ENCODE measurements at regions of chr4 and their contacts with region 1.

Region 1: GRCh38 chr4:184825896-184826690 is at the start of gene ACSL1:
- DNase-seq: peak; percentile 76
- H3K4me3 Mint-ChIP-seq: peak within 1 kb of the TSS; percentile 84
- H3K27ac Mint-ChIP-seq: peak within 1 kb of the TSS; percentile 57
- H3K4me1 Mint-ChIP-seq: peaks cover 31% of the 10 kb centered on the region
- H3K27me3 Mint-ChIP-seq: no peaks in the 10 kb centered on the region
- total RNA-seq, gene ACSL1: 29.8 to 31.9 TPM

Region 2: DNA sequence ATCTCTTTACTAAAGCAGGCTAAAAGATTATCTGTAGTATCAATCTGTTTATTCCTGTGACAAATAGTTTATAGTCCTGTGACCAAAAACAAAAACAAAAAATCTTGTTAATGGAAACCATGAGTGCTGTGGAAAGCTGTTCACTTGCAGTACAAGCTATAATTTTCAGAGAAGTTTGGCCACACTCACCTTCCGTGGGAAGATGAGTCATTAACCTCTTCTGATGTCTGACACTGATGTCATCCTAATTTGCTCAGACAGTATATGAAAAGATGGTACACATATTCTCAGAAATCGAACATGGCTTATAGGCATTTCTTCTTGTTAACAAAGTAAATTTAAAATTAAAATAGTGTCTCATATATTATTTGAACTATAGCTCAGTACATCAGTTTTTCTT is 588.5 kb before region 1 on chr4:
- CTCF ChIA-PET with region 1: no interaction called
- intact Hi-C with region 1: loop called (anchors 10 kb)
- DNase-seq: peak; percentile 84
- H3K4me3 Mint-ChIP-seq: peak overlapping the region; percentile 32
- H3K27ac Mint-ChIP-seq: peak overlapping the region; percentile 93
- H3K4me1 Mint-ChIP-seq: peaks cover 40% of the 10 kb centered on the region
- H3K27me3 Mint-ChIP-seq: no peaks in the 10 kb centered on the region

Region 3: DNA sequence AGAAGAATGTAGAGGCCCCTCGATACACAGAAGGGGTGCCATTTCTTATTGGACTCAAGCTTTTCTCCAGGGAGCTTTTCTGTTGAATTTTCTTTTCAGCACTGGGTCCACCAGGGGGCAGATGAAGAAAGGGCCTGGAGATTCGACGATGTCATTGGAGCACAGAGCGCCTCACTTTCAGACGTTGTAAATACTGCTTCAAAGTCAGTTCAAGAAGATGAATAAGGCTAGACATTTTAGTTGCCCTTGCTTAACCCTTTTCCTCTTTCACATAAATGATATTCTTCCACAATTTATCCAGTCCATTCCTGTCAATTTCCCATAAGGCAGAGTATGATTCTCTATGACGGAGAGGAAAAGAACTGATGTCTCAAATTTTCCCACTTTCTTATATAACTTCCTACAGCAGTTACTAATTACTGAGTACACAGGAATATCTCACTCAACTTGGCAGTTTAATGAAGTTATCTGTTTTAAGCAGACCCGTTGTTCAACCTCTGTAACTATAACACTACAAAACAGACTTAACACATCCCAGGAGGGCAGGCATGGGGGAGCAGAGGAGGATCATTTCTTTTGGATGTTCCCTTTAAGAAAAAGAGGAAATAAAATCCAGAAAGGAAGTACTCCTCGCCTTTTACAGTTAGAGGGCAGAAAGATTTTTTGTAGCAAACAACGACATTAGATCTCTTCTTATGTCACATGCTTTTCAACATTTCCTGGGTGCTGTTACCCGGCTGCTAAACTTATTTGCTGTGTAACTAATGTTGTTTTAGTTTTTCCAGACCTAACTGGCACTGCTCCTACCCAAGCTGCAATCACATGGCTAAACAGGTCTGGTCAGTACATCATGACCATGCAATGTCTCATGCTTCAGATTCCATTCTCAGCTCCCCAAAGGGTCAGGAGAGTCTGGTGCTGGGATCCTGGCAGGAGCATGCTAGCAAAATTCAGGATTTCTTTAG is 80.0 kb before region 1 on chr4:
- CTCF ChIA-PET with region 1: interaction called, 4 read pairs
- intact Hi-C with region 1: loop called (anchors 2 kb)
- DNase-seq: peak; percentile 91
- H3K4me3 Mint-ChIP-seq: no peak overlapping the region
- H3K27ac Mint-ChIP-seq: no peak overlapping the region
- H3K4me1 Mint-ChIP-seq: peaks cover 15% of the 10 kb centered on the region
- H3K27me3 Mint-ChIP-seq: no peaks in the 10 kb centered on the region

Region 4: DNA sequence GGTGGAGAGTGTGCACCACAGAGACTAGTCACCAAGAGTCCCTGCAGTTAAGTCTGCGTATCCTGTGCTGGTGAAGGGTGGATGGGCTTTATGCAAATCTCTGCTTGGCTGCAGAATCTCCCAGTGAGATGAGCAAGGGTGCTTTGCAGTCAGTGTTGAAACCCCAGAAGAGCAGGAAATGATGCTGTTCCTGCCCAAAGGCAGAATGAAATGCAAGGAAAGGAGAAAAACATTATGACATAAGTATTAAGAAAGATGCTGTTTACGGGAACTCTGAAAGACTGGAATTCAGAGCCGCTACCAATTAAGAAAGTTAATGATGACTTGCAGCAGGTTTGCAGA is 25.1 kb after region 1 on chr4:
- CTCF ChIA-PET with region 1: no interaction called
- intact Hi-C with region 1: loop called (anchors 1 kb)
- DNase-seq: peak; percentile 74
- H3K4me3 Mint-ChIP-seq: no peak overlapping the region
- H3K27ac Mint-ChIP-seq: no peak overlapping the region
- H3K4me1 Mint-ChIP-seq: peaks cover 29% of the 10 kb centered on the region
- H3K27me3 Mint-ChIP-seq: no peaks in the 10 kb centered on the region

Region 5: DNA sequence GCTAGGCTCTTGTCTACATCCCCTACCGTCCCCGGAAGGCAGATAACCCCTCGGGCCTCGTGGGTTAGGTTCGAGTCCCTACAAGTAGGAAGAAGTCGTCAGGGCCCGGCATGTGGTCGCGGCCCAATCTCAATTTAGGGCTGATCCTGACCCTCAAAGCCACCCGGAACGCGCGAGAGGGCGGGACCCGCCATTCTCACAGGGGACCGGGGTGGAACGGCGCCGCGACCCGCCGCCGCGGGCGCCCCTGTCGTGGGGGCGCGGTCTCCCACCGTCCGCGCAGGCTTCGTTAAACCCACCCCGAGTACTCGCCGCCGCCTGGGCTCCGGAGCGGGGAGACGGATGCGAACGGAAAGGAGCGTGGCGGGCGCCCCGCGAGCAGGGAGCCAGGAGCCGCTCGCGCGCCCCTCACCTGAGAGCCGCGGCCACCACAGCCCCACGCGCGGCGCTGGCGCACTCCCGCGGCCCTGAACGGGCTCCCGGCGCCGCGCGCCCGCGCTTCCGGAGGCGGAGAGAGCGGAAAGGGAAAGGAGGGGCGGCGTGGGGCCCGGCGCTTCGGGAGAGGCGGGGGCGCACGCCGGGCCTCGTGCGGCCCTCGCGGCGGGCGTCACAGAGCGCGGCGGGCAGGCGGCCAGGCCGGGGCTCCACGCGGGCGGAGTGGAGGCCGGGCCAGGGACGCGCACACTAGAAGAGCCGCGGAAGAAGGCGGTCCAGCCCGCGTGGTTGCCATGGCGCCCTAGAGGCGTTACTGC is 377.6 kb after region 1 on chr4 and contains the start of gene CFAP97:
- CTCF ChIA-PET with region 1: no interaction called
- intact Hi-C with region 1: loop called (anchors 5 kb)
- DNase-seq: peak; percentile 73
- H3K4me3 Mint-ChIP-seq: peak within 1 kb of the TSS; percentile 96
- H3K27ac Mint-ChIP-seq: peak within 1 kb of the TSS; percentile 96
- H3K4me1 Mint-ChIP-seq: peaks cover 32% of the 10 kb centered on the region
- H3K27me3 Mint-ChIP-seq: no peaks in the 10 kb centered on the region
- total RNA-seq, gene CFAP97: 38.4 to 43.6 TPM

Region 6: DNA sequence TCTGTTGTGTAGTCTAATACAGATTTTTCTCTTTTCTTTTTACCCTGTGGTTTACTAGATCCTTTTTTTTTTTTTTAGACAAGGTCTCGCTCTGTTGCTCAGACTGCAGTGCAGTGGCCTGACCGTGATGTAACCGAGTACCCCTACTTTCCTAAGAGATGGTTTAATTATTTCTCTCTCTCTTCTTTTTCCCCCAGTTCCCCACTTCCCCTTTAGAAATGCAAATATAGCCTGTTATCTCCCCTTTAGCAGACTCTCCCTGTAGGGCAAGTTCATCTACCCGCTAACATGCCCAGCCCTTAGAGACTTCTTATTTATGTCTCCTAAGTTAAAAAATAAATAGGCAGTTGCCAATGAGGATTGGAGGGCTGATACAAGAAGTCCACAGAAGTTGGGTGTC is 387.8 kb after region 1 on chr4:
- CTCF ChIA-PET with region 1: no interaction called
- intact Hi-C with region 1: no loop called
- DNase-seq: no peak
- H3K4me3 Mint-ChIP-seq: no peak overlapping the region
- H3K27ac Mint-ChIP-seq: no peak overlapping the region
- H3K4me1 Mint-ChIP-seq: peaks cover 38% of the 10 kb centered on the region
- H3K27me3 Mint-ChIP-seq: no peaks in the 10 kb centered on the region

Measured in activated naive CD4-positive, alpha-beta T cell treated with anti-CD3 and anti-CD28 coated beads for 36 hours (primary cell).